Activated CD4-positive, alpha-beta T cell treated with anti-CD3 and anti-CD28 coated beads, Interleukin-2, amount 10 ng/mL, durations not matched to agents 24 days and 14 days (primary cell): ENCODE measurements at regions of chr19 and their contacts with region 1.

Region 1: GRCh38 chr19:23914402-23915301 is at the start of gene ZNF726:
- DNase-seq: peak; percentile 95
- H3K4me3 Mint-ChIP-seq: peak within 1 kb of the TSS; percentile 97
- H3K27ac Mint-ChIP-seq: peak within 1 kb of the TSS; percentile 98
- H3K4me1 Mint-ChIP-seq: peaks cover 2% of the 10 kb centered on the region
- H3K27me3 Mint-ChIP-seq: no peaks in the 10 kb centered on the region
- total RNA-seq, gene ZNF726: 12.8 and 16.3 TPM in 2 replicates

Region 2: GRCh38 chr19:23249911-23250649 is 664.6 kb before region 1 on chr19 and contains the start of gene ZNF724:
- intact Hi-C with region 1: loop called (anchors 10 kb)
- DNase-seq: peak; percentile 96
- H3K4me3 Mint-ChIP-seq: peak within 1 kb of the TSS; percentile 98
- H3K27ac Mint-ChIP-seq: peak within 1 kb of the TSS; percentile 98
- H3K4me1 Mint-ChIP-seq: peaks cover 7% of the 10 kb centered on the region
- H3K27me3 Mint-ChIP-seq: no peaks in the 10 kb centered on the region
- total RNA-seq, gene ZNF724: 15.5 and 16.1 TPM in 2 replicates

Region 3: DNA sequence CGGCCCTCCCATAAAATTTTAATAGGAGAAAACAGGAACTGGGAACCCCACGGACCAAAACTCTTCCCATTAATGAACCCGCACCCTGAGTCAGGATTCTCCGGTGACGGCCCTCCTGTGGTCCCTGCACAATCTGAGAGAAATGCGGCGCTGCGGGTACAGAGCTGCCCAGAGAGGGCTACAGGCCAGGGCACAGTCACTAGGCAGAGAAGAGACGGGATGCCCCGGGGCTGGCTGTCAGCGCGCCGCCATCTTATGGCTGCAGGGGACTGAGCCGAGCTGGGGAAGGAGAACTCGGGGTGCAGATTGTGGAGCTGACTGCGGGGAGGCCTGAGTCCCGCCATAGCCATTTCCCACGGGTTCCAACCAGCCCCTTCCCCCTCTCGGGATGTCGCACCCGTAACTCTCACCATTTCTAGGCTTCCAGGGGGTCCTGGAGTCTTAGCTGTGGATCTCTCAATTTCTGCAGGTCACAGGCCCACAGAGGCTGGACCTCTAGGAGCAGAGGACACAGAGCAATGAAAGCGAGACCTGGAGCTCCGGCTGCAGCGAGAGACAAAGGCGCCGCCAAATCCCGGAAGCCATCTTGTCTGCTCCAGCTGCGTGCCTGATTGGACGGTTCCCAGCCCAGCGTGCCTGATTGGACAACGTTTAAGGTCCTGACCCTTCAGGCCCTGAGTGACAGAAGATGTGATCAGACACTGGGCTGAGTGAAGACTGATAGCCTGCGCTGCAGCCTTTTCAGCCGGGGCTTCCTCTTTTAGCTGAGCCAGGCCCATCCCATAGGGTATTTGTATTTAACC is 227.8 kb before region 1 on chr19 and contains the start of gene ZNF675:
- intact Hi-C with region 1: loop called (anchors 1 kb)
- DNase-seq: peak; percentile 96
- H3K4me3 Mint-ChIP-seq: peak within 1 kb of the TSS; percentile 97
- H3K27ac Mint-ChIP-seq: peak within 1 kb of the TSS; percentile 99
- H3K4me1 Mint-ChIP-seq: peaks cover 10% of the 10 kb centered on the region
- H3K27me3 Mint-ChIP-seq: no peaks in the 10 kb centered on the region
- total RNA-seq, gene ZNF675: 17.0 and 17.3 TPM in 2 replicates

Region 4: GRCh38 chr19:23758187-23759074 is 156.2 kb before region 1 on chr19 and contains the start of gene ZNF681:
- intact Hi-C with region 1: loop called (anchors 2 kb)
- DNase-seq: peak; percentile 93
- H3K4me3 Mint-ChIP-seq: peak within 1 kb of the TSS; percentile 95
- H3K27ac Mint-ChIP-seq: peak within 1 kb of the TSS; percentile 92
- H3K4me1 Mint-ChIP-seq: peaks cover 8% of the 10 kb centered on the region
- H3K27me3 Mint-ChIP-seq: no peaks in the 10 kb centered on the region
- total RNA-seq, gene ZNF681: 2.6 and 3.0 TPM in 2 replicates

Region 5: GRCh38 chr19:24033301-24033962 is 118.8 kb after region 1 on chr19:
- intact Hi-C with region 1: loop called (anchors 2 kb)
- DNase-seq: peak; percentile 94
- H3K4me3 Mint-ChIP-seq: peak overlapping the region; percentile 98
- H3K27ac Mint-ChIP-seq: peak overlapping the region; percentile 99
- H3K4me1 Mint-ChIP-seq: peaks cover 23% of the 10 kb centered on the region
- H3K27me3 Mint-ChIP-seq: no peaks in the 10 kb centered on the region

Region 6: GRCh38 chr19:24099829-24100228 is 185.2 kb after region 1 on chr19:
- intact Hi-C with region 1: loop called (anchors 5 kb)
- DNase-seq: no peak
- H3K4me3 Mint-ChIP-seq: no peak overlapping the region
- H3K27ac Mint-ChIP-seq: no peak overlapping the region
- H3K4me1 Mint-ChIP-seq: peaks cover 3% of the 10 kb centered on the region
- H3K27me3 Mint-ChIP-seq: no peaks in the 10 kb centered on the region